K562 (cell line): ENCODE measurements at regions of chr3 and their contacts with region 1.

Region 1: DNA sequence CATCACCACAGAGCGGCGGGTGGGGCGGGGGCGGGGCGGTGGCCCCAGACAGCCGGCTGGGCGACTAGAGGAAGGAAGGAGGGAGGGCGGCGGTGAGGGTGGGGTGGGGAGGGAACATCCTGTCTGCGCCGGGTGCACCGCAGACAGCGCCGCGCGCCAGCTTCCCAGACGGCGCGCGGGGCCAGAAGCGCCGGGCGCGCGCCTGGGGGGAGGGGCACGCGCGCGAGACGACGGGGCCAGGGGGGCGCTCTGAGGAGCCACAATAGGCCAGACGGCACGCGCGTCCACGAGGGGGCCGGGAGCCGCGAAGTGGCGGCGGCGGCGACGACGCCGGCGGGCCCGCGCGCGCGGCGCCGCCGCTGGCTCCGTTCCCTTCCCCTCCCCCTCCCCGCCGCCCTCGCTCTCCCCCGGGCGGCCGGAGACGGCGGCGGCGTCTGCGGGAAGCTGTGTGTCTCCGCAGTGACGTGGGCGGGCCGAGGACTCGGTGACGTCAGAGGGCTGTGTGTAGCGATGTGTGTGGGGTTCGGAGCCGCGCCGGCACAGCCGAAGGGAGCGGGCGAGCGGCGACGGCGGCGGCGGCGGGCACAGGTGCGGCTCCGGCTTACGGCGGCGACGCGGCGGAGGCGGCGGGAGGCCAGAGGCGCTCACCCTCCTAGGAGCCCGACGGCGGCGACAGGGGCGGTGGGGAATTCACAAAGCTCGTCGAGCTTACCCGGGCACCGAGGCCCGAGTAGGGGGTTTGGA is at the start of gene SKIL:
- DNase-seq: peak; percentile 82 to 97 (median 86)
- ATAC-seq: peak; percentile 73
- H3K4me3 ChIP-seq: peak within 1 kb of the TSS; percentile 80
- H3K27ac ChIP-seq: peak within 1 kb of the TSS; percentile 95
- H3K4me1 ChIP-seq: peaks cover 9 to 38% of the 10 kb centered on the region in 2 experiments
- H3K27me3 ChIP-seq: no peaks in the 10 kb centered on the region
- CTCF ChIP-seq: peak in 2 of 3 experiments; percentile 28 to 39; a peak in 4 of 6 replicates
- EP300 ChIP-seq: peak; percentile 64; the same call in 1 of the 2 replicates
- POLR2A ChIP-seq: no peak; the same call in 1 of the 2 replicates
- RAD21 ChIP-seq: no peak
- polyA plus RNA-seq, gene SKIL: 4.4 to 9.7 TPM

Region 2: DNA sequence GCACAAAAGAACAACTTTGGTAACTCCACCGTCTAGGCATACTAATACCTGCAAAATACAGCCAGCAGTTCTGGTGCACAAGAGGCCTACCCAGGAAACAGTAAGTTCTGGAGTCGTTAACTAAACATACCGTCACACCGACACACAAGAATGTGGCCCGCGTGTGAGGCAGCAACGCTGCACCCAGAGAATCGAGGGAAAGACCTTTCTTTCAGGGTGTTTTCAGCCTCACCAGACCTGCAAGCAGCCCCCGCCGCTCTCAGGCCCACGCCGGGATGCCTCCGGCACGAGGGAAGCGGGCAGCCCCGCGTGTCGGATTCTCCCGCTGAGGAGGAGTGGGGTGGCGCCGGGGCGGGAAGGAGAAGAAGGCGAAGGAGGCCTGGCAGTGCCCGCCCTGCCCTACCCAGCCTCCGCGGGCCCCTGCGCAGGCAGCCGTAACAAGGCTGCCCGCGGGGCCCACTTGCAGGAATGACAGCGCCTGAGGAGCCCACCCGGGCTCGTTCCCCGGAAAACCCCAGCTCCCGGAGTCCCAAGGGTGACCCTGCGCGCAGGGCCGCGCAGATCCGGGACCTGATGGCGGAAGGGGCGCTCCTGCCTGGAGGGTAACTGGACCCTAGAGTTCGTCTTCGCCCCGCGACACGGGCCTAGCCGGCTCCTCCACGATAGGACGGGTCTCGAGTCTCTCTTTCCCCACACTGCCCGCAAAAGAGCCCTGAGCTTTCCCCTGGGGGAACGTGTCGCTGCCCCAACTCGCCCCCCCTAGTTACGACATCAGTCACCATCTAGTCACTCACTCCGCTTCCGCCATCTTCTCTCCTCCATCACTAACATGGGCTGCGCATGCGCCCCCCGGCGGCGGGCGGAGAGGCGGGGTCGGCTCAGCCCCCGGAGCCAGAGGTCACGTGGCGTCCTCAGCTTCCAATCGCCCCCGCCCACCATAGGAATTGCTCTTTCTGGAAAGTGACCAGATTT is 176.2 kb before region 1 on chr3 and contains the start of gene PHC3:
- CTCF ChIA-PET with region 1: no interaction called
- POLR2A ChIA-PET with region 1: no interaction called
- in situ Hi-C with region 1: no loop called
- intact Hi-C with region 1: loop called (anchors 10 kb)
- DNase-seq: peak; percentile 96 to 99 (median 98)
- ATAC-seq: peak; percentile 92
- H3K4me3 ChIP-seq: peak within 1 kb of the TSS; percentile 77
- H3K27ac ChIP-seq: peak within 1 kb of the TSS; percentile 91
- H3K4me1 ChIP-seq: peaks cover 4 to 15% of the 10 kb centered on the region in 2 experiments; a peak in 3 of 5 replicates
- H3K27me3 ChIP-seq: no peaks in the 10 kb centered on the region
- CTCF ChIP-seq: no peak
- EP300 ChIP-seq: no peak
- POLR2A ChIP-seq: peak; percentile 94
- RAD21 ChIP-seq: no peak
- polyA plus RNA-seq, gene PHC3: 4.6 to 6.0 TPM

Region 3: DNA sequence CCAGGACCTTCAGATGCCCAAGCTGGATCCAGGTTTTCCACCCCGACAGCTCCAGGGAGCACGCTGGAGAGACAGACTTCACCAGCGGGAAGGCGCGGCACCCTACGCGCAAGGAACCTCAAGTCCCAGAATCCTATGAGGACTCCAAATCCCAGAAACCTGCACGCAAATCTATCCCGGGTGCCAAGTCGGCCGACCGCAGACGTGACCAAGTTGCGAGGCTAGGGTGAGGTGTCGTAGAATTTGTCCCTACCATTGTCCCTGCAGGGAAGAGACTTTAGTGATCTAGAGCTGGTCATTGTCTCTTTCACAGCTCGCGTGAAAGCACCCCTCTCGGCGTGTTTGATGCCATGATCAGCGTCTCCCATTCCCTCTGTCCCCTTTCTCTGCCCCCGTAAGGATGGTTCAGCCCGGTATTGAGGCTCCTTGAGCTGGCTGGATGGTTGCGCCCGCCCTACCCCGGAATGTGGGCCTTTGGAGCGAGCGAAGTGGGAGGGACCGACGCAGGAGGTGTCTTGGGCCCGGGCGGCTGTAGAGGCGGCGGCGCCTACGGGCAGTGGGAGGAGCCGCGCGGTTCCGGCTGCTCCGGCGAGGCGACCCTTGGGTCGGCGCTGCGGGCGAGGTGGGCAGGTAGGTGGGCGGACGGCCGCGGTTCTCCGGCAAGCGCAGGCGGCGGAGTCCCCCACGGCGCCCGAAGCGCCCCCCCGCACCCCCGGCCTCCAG is 135.3 kb before region 1 on chr3 and contains the start of gene PRKCI:
- CTCF ChIA-PET with region 1: no interaction called
- POLR2A ChIA-PET with region 1: no interaction called
- in situ Hi-C with region 1: no loop called
- intact Hi-C with region 1: loop called (anchors 5 kb)
- DNase-seq: peak; percentile 95 to 98 (median 96)
- ATAC-seq: peak; percentile 98
- H3K4me3 ChIP-seq: peak within 1 kb of the TSS; percentile 91
- H3K27ac ChIP-seq: peak within 1 kb of the TSS; percentile 100
- H3K4me1 ChIP-seq: peaks cover 2 to 4% of the 10 kb centered on the region in 2 experiments; a peak in 3 of 5 replicates
- H3K27me3 ChIP-seq: no peaks in the 10 kb centered on the region
- CTCF ChIP-seq: no peak
- EP300 ChIP-seq: no peak
- POLR2A ChIP-seq: peak; percentile 77
- RAD21 ChIP-seq: no peak
- polyA plus RNA-seq, gene PRKCI: 10.5 to 13.5 TPM

Region 4: GRCh38 chr3:170307671-170308403 is 49.5 kb before region 1 on chr3:
- CTCF ChIA-PET with region 1: no interaction called
- POLR2A ChIA-PET with region 1: no interaction called
- in situ Hi-C with region 1: no loop called
- intact Hi-C with region 1: loop called (anchors 2 kb)
- DNase-seq: peak in 1 of 4 experiments; percentile 17
- ATAC-seq: peak; percentile 43; the same call in 2 of the 3 replicates
- H3K4me3 ChIP-seq: no peak overlapping the region
- H3K27ac ChIP-seq: no peak overlapping the region; the same call in 2 of the 3 replicates
- H3K4me1 ChIP-seq: peaks cover 0 to 5% of the 10 kb centered on the region in 2 experiments; a peak in 1 of 5 replicates
- H3K27me3 ChIP-seq: no peaks in the 10 kb centered on the region
- CTCF ChIP-seq: no peak
- EP300 ChIP-seq: no peak
- POLR2A ChIP-seq: no peak
- RAD21 ChIP-seq: no peak